Activated B cell treated with CpG ODN at 0.5 μM for 24 hours (primary cell): ENCODE measurements at regions of chr5 and their contacts with region 1.

Region 1: DNA sequence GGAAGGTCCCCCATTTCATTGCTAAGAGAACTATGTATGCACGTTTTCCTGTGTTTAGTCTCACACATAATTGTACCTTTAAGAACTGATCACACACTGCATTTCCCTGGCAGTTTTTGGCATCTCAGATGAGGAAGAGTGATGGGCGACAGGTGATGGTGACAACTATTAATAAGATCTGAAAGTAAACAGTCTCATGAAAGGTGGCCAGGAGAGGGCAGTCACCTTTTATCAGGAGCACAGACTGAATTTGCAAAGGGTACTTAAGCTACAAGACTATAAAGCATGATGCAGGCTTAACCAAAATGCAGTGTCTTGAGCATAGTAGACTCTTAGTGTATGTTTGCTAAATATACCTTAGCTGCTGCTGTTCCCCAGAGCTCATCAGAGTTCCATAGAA is 91.5 kb downstream of the GHR start:
- DNase-seq: no peak
- ATAC-seq: no peak
- H3K4me3 Mint-ChIP-seq: no peak overlapping the region
- H3K27ac Mint-ChIP-seq: no peak overlapping the region
- H3K4me1 Mint-ChIP-seq: no peaks in the 10 kb centered on the region
- H3K27me3 Mint-ChIP-seq: no peaks in the 10 kb centered on the region
- CTCF ChIP-seq: no peak

Region 2: DNA sequence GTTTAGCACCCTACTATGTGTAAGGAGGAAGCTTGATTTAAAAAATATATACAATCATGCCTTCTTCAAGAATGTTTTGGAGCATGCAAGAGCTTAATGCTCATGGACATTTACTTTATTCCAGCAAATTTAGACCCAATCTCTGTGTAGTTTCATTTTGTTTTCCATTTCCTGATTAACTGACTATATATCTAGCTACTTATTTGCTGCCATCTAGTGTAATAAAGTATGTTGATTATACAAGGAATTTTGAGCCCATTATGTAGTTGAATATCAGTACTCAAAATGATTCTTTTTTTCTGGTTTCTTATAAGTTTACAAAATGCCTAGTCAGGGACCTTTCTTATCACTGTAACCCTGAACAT is 141.9 kb after region 1 on chr5:
- CTCF ChIA-PET with region 1: interaction called, 5 read pairs
- POLR2A ChIA-PET with region 1: no interaction called
- intact Hi-C with region 1: loop called (anchors 1 kb)
- DNase-seq: no peak
- ATAC-seq: no peak
- H3K4me3 Mint-ChIP-seq: no peak overlapping the region
- H3K27ac Mint-ChIP-seq: no peak overlapping the region
- H3K4me1 Mint-ChIP-seq: peaks cover 7% of the 10 kb centered on the region
- H3K27me3 Mint-ChIP-seq: peaks cover 10% of the 10 kb centered on the region
- CTCF ChIP-seq: no peak

Region 3: DNA sequence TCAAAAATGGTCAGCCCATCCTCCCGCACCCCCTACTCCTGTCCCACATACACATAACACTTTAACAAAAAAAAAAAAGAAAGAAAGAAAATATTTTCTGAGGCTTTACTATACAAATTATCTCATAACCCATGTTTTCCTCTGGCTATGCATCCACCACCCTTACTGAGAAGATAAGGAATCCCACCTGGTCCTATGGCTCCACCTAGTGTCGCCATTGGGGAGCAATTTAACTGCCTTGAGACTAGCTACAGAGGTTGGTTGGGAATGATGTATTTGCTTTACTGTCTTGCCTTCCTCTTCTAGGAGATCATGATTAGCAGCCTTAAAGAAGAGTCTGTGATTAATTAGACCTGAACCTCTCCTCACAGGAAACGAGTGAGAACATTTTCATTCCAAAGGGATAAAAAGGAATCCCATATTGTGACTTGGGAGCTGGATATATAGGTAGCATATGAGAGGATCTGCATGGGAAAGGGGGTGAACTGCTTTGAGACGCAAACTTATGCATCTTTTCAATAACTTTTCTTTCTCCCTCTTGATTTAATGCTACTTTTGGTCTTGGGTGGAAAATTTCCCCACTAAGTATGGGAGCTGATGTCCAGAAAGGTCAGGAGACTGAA is 374.7 kb after region 1 on chr5:
- CTCF ChIA-PET with region 1: no interaction called
- POLR2A ChIA-PET with region 1: no interaction called
- intact Hi-C with region 1: loop called (anchors 10 kb)
- DNase-seq: no peak
- ATAC-seq: peak; percentile 60
- H3K4me3 Mint-ChIP-seq: no peak overlapping the region
- H3K27ac Mint-ChIP-seq: no peak overlapping the region
- H3K4me1 Mint-ChIP-seq: no peaks in the 10 kb centered on the region
- H3K27me3 Mint-ChIP-seq: peaks cover 11% of the 10 kb centered on the region
- CTCF ChIP-seq: peak; percentile 69